AG04449 (cell line): ENCODE measurements at regions of chr9 and their contacts with region 1.

Region 1: GRCh38 chr9:112361601-112362000 is 18.3 kb upstream of the HSDL2 start:
- DNase-seq: no peak
- H3K4me3 ChIP-seq: no peak overlapping the region
- CTCF ChIP-seq: peak; percentile 5

Region 2: DNA sequence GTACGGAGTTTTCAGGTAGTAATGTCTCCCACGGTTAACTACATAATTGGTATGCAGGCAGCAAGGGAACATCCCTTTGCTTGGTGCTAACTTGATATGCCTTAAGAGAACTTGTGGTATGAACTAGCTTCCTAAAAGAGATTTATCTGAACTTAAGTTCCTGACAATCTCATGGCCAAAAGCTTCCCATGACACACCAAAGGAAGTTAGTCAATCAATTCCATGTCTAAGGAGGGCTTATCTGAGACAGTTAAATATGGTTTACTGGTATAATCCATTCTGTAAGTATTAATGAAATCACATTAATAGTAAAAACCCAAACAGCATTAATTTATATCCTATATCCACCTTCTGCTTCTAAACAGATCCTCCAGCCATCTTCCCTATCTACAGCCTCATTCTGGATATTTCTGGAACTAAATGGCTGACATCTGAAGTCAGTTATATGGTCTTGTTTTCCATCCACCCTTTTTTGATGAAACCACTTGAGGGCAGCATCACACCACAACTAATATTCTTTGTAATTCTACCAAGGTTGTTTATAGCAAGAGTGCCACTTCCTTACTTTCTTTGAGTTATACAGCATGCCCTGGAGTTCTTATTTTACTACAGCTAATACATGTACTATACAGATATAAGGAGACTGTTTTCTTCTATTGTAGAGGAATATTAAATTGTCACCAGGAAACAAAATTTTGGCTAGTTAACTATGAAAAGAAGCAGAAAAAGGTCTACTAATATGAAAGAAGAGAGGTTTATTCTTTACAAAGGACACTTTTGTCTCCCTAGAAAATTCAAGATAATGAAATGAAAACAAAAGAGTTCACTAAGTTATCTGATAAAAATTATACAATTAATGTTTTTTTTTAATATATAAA is 601.6 kb before region 1 on chr9:
- CTCF ChIA-PET with region 1: interaction called, 47 read pairs
- POLR2A ChIA-PET with region 1: no interaction called
- DNase-seq: peak; percentile 65
- H3K4me3 ChIP-seq: no peak overlapping the region
- CTCF ChIP-seq: peak; percentile 47

Region 3: DNA sequence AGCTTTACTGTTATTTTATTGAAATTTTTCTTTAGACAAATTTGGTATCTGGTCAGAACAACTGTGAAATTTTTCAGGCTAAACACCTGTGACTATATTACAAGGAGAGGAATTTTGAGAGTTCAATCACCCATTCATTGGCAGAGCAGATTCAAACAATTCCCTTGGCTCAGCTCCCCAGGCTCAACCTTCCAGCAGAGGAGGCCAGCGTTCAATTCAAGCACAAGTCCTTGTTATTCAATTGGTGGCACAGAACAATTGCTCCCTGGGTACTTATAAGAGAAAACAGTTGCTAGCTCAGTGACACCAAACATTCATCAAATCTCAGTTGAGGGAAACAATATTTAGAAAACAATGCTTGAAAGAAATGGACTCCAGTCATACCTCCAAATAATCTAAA is 269.8 kb before region 1 on chr9:
- CTCF ChIA-PET with region 1: interaction called, 241 read pairs
- POLR2A ChIA-PET with region 1: interaction called, 3 read pairs
- DNase-seq: no peak
- H3K4me3 ChIP-seq: no peak overlapping the region
- CTCF ChIP-seq: peak; percentile 15

Region 4: GRCh38 chr9:112104901-112105300 is 256.7 kb before region 1 on chr9:
- CTCF ChIA-PET with region 1: interaction called, 241 read pairs
- POLR2A ChIA-PET with region 1: no interaction called
- DNase-seq: no peak
- H3K4me3 ChIP-seq: no peak overlapping the region
- CTCF ChIP-seq: no peak

Region 5: DNA sequence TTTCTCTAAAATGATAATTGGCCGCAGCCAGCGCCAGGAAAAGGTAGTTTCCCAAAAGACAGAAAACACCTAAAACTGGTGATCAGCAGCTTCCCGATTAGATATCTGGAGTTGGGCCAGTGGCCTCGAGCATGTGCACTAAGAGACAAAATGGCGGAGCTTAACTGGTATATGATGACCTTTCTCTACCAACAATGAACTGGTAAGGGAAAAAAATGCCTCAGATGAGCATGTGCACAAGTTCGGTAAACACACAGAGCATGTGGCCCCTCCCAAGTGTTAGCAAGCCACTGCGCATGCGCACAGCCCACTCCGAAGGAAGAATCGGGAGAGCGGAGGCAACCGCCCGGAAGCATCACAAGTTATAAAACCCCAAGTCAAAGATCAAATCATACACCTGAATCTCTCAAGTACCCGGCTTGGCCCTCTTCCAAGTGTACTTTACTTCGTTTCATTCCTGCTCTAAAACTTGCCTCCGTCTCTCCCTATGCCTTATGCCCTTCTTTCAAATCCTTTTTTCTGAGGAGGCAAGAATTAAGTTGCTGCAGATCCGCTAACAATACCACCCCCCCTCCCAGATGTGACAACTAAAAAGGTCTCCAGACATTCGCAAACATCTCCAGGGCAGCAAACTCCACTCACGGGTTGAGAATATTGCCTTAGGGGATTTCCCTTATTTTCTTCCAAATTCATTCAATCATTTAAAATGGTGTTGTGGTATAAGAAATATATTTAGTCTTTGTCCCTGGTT is 13.2 kb before region 1 on chr9:
- CTCF ChIA-PET with region 1: interaction called, 20 read pairs
- POLR2A ChIA-PET with region 1: no interaction called
- DNase-seq: no peak
- H3K4me3 ChIP-seq: peak overlapping the region; percentile 51
- CTCF ChIP-seq: no peak

Region 6: GRCh38 chr9:112711050-112711689 is 349.6 kb after region 1 on chr9:
- CTCF ChIA-PET with region 1: interaction called, 11 read pairs
- POLR2A ChIA-PET with region 1: no interaction called
- DNase-seq: no peak
- H3K4me3 ChIP-seq: no peak overlapping the region
- CTCF ChIP-seq: peak; percentile 57